Activated naive CD4-positive, alpha-beta T cell treated with anti-CD3 and anti-CD28 coated beads for 36 hours (primary cell): ENCODE measurements at regions of chr20 and their contacts with region 1.

Region 1: GRCh38 chr20:3795511-3796468 is at the start of gene CDC25B:
- DNase-seq: peak; percentile 95
- H3K4me3 Mint-ChIP-seq: peak within 1 kb of the TSS; percentile 94
- H3K27ac Mint-ChIP-seq: peak within 1 kb of the TSS; percentile 97
- H3K4me1 Mint-ChIP-seq: peaks cover 49% of the 10 kb centered on the region
- H3K27me3 Mint-ChIP-seq: no peaks in the 10 kb centered on the region
- total RNA-seq, gene CDC25B: 94.8 to 97.7 TPM

Region 2: GRCh38 chr20:3811467-3812258 is 15.9 kb after region 1 on chr20:
- CTCF ChIA-PET with region 1: interaction called, 5 read pairs
- intact Hi-C with region 1: loop called (anchors 1 kb)
- DNase-seq: peak; percentile 97
- H3K4me3 Mint-ChIP-seq: peak overlapping the region; percentile 86
- H3K27ac Mint-ChIP-seq: peak overlapping the region; percentile 97
- H3K4me1 Mint-ChIP-seq: peaks cover 70% of the 10 kb centered on the region
- H3K27me3 Mint-ChIP-seq: no peaks in the 10 kb centered on the region

Region 3: GRCh38 chr20:3846740-3847428 is 51.1 kb after region 1 on chr20 and contains the start of gene MAVS:
- CTCF ChIA-PET with region 1: no interaction called
- intact Hi-C with region 1: loop called (anchors 2 kb)
- DNase-seq: peak; percentile 84
- H3K4me3 Mint-ChIP-seq: peak within 1 kb of the TSS; percentile 85
- H3K27ac Mint-ChIP-seq: peak within 1 kb of the TSS; percentile 83
- H3K4me1 Mint-ChIP-seq: peaks cover 29% of the 10 kb centered on the region
- H3K27me3 Mint-ChIP-seq: no peaks in the 10 kb centered on the region
- total RNA-seq, gene MAVS: 14.8 to 16.0 TPM